Heart right ventricle (tissue), 16 donors: ENCODE measurements at regions of chrX and their contacts with region 1.

Region 1: DNA sequence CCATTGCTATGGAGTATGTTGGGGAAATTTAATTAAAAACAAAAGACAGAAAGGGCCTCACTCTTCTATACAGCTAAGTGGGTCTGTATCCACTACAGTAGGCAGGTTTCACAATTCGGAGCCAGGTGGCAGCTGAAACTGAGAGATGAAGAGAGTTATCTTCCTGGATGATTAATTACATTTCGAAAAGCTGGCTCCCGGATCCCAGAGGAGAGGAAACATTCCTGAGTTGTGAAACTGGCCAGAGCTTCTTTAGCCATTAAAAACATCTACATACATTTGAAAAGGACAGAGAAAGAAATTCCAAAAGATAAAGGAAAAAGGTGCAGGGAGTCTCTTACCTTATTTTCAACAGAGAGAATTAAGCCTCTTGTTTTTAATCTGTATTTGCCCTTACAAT is 15.5 kb upstream of the PDZD4 start:
- DNase-seq: no peak
- ATAC-seq: no peak
- H3K4me3 ChIP-seq: no peak overlapping the region
- H3K27ac ChIP-seq: no peak overlapping the region
- H3K4me1 ChIP-seq: no peaks in the 10 kb centered on the region
- H3K27me3 ChIP-seq: peaks cover 0 to 93% (median 0%) of the 10 kb centered on the region in 7 donors
- CTCF ChIP-seq: no peak

Region 2: GRCh38 chrX:153897899-153898298 is 52.1 kb after region 1 on chrX:
- intact Hi-C with region 1: loop called in 1 of 10 experiments (anchors 1 kb)
- DNase-seq: no peak
- ATAC-seq: no peak
- H3K4me3 ChIP-seq: no peak overlapping the region
- H3K27ac ChIP-seq: no peak overlapping the region
- H3K4me1 ChIP-seq: peaks cover 0 to 25% (median 4%) of the 10 kb centered on the region in 9 donors
- H3K27me3 ChIP-seq: peaks cover 0 to 80% (median 0%) of the 10 kb centered on the region in 7 donors
- CTCF ChIP-seq: no peak